CD4-positive, alpha-beta memory T cell (primary cell): ENCODE measurements at regions of chr20 and their contacts with region 1.

Region 1: GRCh38 chr20:45028424-45029136 is 62.3 kb downstream of the STK4 start:
- DNase-seq: no peak
- H3K4me3 ChIP-seq: no peak overlapping the region
- H3K4me3 Mint-ChIP-seq: peak overlapping the region in 7 of 8 donors; percentile 0 to 77 (median 63)
- H3K27ac ChIP-seq: no peak overlapping the region
- H3K27ac Mint-ChIP-seq: peak overlapping the region; percentile 53 to 90 (median 68)
- H3K4me1 ChIP-seq: peaks cover 88% of the 10 kb centered on the region
- H3K4me1 Mint-ChIP-seq: peaks cover 48 to 80% (median 64%) of the 10 kb centered on the region in 4 donors
- H3K27me3 ChIP-seq: no peaks in the 10 kb centered on the region
- H3K27me3 Mint-ChIP-seq: no peaks in the 10 kb centered on the region

Region 2: DNA sequence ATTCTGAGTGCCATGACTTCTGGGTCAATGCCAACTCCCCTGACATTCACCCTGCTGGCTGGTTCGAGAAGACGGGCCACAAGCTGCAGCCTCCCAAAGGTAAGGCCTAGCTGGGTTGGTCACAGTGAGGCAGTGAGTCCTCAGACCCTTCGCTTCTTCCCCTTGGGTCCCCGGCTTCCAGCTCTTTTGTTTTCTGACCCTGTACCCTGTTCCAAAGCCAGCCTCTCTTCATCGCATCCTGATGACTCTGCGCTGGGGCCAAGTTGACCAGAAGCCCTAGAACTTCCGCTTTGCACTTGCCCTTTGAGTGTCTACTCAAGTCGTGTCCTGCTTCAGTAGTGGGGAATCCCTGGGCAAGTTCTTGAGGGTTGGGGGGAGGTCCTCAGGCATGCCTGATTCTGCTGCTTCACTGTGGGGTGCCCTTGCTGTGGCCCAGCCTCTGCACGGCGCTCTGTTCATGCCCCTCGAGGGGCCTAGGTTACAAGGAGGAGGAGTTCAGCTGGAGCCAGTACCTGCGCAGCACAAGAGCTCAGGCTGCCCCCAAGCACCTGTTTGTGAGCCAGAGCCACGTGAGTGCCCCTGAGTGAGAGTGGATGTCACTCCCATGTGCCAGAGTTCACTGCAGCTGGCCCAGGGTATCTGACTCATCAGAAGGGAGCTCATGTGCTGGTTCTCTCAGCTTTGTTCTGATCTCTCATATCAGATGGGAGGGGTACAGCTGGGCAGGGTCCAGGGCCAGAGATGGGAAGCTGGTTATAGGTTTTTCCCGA is 1498.1 kb before region 1 on chr20:
- CTCF ChIA-PET with region 1: no interaction called
- POLR2A ChIA-PET with region 1: no interaction called
- intact Hi-C with region 1: no loop called
- DNase-seq: no peak
- H3K4me3 ChIP-seq: no peak overlapping the region
- H3K4me3 Mint-ChIP-seq: no peak overlapping the region
- H3K27ac ChIP-seq: no peak overlapping the region
- H3K27ac Mint-ChIP-seq: no peak overlapping the region
- H3K4me1 ChIP-seq: no peaks in the 10 kb centered on the region
- H3K4me1 Mint-ChIP-seq: peaks cover 0 to 2% (median 0%) of the 10 kb centered on the region in 4 donors
- H3K27me3 ChIP-seq: no peaks in the 10 kb centered on the region
- H3K27me3 Mint-ChIP-seq: peaks cover 3 to 4% of the 10 kb centered on the region in 2 donors

Region 3: GRCh38 chr20:45044084-45044573 is 15.5 kb after region 1 on chr20:
- CTCF ChIA-PET with region 1: interaction called, 13 read pairs
- POLR2A ChIA-PET with region 1: interaction called, 4 read pairs
- intact Hi-C with region 1: no loop called
- DNase-seq: peak; percentile 60 to 73 (median 64)
- H3K4me3 ChIP-seq: no peak overlapping the region
- H3K4me3 Mint-ChIP-seq: peak overlapping the region in 3 of 8 donors; percentile 1 to 17 (median 5)
- H3K27ac ChIP-seq: no peak overlapping the region
- H3K27ac Mint-ChIP-seq: peak overlapping the region; percentile 5 to 91 (median 58)
- H3K4me1 ChIP-seq: peaks cover 78% of the 10 kb centered on the region
- H3K4me1 Mint-ChIP-seq: peaks cover 49 to 85% (median 67%) of the 10 kb centered on the region in 4 donors
- H3K27me3 ChIP-seq: no peaks in the 10 kb centered on the region
- H3K27me3 Mint-ChIP-seq: no peaks in the 10 kb centered on the region